Activated naive CD4-positive, alpha-beta T cell treated with anti-CD3 and anti-CD28 coated beads for 36 hours (primary cell): ENCODE measurements at regions of chr20 and their contacts with region 1.

Region 1: GRCh38 chr20:46689082-46689754 is at the start of gene TP53RK:
- DNase-seq: peak; percentile 99
- H3K4me3 Mint-ChIP-seq: peak within 1 kb of the TSS; percentile 90
- H3K27ac Mint-ChIP-seq: peak within 1 kb of the TSS; percentile 87
- H3K4me1 Mint-ChIP-seq: peaks cover 32% of the 10 kb centered on the region
- H3K27me3 Mint-ChIP-seq: no peaks in the 10 kb centered on the region
- total RNA-seq, gene TP53RK: 7.8 to 8.3 TPM

Region 2: DNA sequence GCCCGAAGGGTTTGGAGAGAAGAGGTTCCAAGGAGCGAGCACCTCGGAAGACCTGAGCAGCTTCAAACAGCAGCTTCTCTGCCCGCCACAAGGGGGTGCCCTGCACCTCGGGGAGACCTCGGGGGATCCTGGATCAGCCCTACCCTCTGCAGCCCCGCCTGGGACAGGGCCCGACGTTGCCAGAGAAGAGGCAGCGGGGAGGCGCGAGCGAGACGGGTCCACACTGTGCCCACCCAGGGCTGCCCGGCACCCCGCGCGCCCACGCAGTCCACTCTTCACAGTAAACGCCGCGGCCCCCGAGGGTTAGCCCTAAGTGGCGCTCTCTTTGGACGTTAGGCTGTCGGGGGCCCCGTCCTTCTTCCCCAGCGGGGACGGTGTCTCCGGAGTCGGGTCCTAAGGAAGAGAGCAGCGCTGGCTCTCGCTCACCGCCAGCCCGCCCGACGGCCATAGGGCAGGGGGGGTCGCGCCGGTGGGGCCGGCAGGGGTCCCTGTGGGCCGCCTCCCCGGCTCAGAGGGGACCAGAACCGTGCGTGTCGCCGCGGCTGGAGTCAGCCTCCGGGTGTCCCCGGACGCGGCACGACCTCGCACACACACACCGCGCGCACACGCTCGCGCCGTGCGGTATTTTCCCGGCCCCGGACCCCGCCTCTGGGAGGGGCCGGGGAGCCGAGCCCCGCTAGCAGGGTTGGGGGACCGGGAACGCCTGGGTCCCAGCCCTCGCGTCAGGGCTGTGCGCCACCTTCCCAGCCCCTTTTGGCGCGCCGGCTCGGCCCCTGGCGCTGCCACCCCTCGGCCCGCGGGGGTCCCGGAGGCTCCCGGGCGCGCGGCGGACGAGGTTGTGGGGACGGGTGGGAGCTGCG is 381.8 kb before region 1 on chr20:
- CTCF ChIA-PET with region 1: no interaction called
- intact Hi-C with region 1: loop called (anchors 5 kb)
- DNase-seq: peak; percentile 81
- H3K4me3 Mint-ChIP-seq: peak overlapping the region; percentile 25
- H3K27ac Mint-ChIP-seq: no peak overlapping the region
- H3K4me1 Mint-ChIP-seq: peaks cover 7% of the 10 kb centered on the region
- H3K27me3 Mint-ChIP-seq: peaks cover 57% of the 10 kb centered on the region

Region 3: GRCh38 chr20:46363800-46364634 is 325.2 kb before region 1 on chr20:
- CTCF ChIA-PET with region 1: no interaction called
- intact Hi-C with region 1: loop called (anchors 5 kb)
- DNase-seq: peak; percentile 87
- H3K4me3 Mint-ChIP-seq: peak overlapping the region; percentile 88
- H3K27ac Mint-ChIP-seq: peak overlapping the region; percentile 86
- H3K4me1 Mint-ChIP-seq: peaks cover 80% of the 10 kb centered on the region
- H3K27me3 Mint-ChIP-seq: no peaks in the 10 kb centered on the region

Region 4: GRCh38 chr20:46400828-46401477 is 288.3 kb before region 1 on chr20:
- CTCF ChIA-PET with region 1: no interaction called
- intact Hi-C with region 1: loop called (anchors 1 kb)
- DNase-seq: peak; percentile 63
- H3K4me3 Mint-ChIP-seq: peak overlapping the region; percentile 59
- H3K27ac Mint-ChIP-seq: peak overlapping the region; percentile 91
- H3K4me1 Mint-ChIP-seq: peaks cover 60% of the 10 kb centered on the region
- H3K27me3 Mint-ChIP-seq: no peaks in the 10 kb centered on the region

Region 5: GRCh38 chr20:46406199-46406985 is 282.8 kb before region 1 on chr20 and contains the start of gene ELMO2:
- CTCF ChIA-PET with region 1: interaction called, 3 read pairs
- intact Hi-C with region 1: loop called (anchors 1 kb)
- DNase-seq: peak; percentile 98
- H3K4me3 Mint-ChIP-seq: peak within 1 kb of the TSS; percentile 88
- H3K27ac Mint-ChIP-seq: peak within 1 kb of the TSS; percentile 88
- H3K4me1 Mint-ChIP-seq: peaks cover 55% of the 10 kb centered on the region
- H3K27me3 Mint-ChIP-seq: no peaks in the 10 kb centered on the region
- total RNA-seq, gene ELMO2: 76.8 to 81.0 TPM

Region 6: DNA sequence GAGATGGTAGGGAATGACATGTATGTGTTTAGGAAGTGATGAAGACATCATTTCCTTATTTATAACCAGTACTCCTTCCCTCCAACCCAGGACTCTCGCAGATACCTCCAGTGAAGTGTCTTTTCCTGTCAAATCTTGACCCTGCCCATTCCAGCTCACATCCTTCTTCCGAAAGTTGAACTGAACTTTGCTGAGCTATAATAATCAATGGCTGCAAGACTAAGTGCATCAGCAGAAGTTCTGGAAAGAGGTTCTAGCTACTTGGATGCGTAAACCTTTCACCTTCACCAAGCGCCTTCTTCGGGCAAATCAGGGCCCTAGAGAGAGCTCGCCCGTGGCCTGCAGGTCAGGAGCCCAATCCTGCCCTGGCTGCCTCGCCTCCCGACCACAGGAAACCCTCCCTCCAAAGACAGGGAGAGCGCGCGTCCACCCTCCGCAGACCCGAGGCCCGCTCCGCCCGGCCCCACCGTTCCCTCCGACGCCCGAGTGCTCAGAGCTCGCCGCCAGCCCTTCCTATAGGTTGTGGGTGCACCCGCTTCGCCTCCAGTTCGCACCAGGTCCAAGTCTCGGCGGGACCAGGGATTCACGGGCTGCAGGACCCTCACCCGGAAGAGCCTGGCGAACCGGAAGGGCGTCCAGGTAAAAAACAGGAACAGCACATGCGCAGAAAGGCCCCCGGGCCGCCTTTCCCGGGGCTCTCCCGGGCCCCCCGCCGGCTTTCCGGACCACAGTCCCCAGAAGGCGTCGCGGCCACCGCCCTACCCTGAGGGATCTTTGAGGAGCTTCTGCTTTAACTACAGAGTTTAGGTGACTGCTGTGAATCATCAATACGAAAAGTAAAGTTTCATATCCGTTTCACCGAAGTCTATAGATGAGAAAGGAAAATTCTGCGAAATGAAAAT is 176.0 kb before region 1 on chr20 and contains the start of gene ZNF334:
- CTCF ChIA-PET with region 1: interaction called, 4 read pairs
- intact Hi-C with region 1: loop called (anchors 2 kb)
- DNase-seq: peak; percentile 77
- H3K4me3 Mint-ChIP-seq: peak within 1 kb of the TSS; percentile 79
- H3K27ac Mint-ChIP-seq: peak within 1 kb of the TSS; percentile 39
- H3K4me1 Mint-ChIP-seq: peaks cover 29% of the 10 kb centered on the region
- H3K27me3 Mint-ChIP-seq: peaks cover 39% of the 10 kb centered on the region
- total RNA-seq, gene ZNF334: 1.7 to 2.1 TPM

Region 7: DNA sequence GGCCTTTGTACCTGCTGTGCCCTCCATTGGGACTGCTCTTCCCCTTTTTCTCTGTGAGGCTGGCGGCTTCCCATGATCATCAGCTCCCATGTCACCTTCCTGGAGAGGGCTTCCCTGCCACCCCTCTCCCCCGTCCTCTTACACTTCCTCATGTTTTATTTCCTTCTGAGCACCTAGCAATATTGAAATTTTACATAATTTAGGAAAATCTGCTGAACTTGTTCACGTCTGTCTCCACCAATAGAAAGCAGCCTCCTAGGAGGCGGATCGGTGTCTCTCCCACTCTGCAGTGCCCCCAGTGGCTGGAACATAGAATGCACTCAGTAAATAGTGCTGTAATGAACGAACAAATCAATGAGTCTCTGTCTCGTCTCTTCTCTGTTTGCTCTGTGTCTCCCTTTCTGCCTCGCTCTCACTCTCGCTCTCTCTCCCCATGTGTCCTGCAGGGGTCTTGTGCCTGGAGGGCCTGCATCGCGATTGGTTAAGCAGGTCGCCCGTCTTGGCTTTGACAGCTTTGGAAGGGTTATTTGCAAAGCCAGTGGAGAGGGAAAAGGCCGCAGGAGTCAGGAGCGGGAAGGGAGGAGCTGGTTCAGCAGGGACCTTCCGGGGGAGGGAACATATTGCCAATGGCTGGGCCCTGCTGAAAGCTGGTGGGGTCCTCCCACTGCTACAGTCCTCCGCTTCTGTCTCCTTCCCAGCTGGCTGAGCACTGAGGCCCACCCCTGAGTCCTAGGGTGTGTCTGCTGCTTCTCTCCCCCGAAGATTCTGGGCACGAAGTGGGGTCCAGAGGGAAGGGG is 126.6 kb before region 1 on chr20:
- CTCF ChIA-PET with region 1: no interaction called
- intact Hi-C with region 1: loop called (anchors 2 kb)
- DNase-seq: peak; percentile 83
- H3K4me3 Mint-ChIP-seq: no peak overlapping the region
- H3K27ac Mint-ChIP-seq: no peak overlapping the region
- H3K4me1 Mint-ChIP-seq: peaks cover 14% of the 10 kb centered on the region
- H3K27me3 Mint-ChIP-seq: peaks cover 7% of the 10 kb centered on the region

Region 8: DNA sequence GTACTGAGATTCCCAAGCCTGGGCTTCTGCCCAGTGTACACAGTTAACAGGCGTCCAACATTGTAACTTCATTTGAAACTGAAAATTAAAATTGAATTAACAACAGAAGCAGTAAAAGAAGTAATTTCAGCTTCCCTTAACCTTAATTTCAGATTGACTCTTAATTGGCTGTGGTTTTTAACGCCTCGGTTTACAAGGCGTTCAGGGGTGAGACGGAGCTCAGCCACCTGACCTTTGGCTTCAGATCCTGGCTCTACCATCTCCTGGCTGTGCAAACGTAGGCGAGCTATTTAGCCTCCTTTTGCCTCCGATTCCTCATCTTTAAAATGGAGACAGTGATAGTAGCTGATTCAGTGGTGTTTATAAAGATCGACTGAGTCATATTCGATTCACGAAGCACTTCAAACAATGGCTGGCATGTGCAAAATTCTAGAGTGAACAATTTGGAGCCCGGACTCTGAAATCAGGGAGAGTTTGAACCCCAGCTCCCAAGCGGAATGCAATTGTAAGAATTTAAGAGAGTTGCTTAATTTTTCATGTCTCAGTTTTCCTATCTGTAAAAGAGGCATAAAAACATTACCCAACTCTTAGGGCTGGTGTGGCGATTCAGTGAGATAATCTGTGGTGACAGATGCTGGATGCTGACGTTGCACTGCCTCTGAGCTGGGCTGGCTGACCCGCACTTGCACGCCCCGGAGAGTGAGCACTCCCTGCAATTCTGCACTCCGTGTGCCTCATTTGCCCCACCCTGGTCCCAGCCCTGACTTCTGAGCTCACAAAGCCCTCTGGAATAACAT is 115.2 kb before region 1 on chr20:
- CTCF ChIA-PET with region 1: no interaction called
- intact Hi-C with region 1: no loop called
- DNase-seq: no peak
- H3K4me3 Mint-ChIP-seq: no peak overlapping the region
- H3K27ac Mint-ChIP-seq: no peak overlapping the region
- H3K4me1 Mint-ChIP-seq: no peaks in the 10 kb centered on the region
- H3K27me3 Mint-ChIP-seq: peaks cover 3% of the 10 kb centered on the region

Region 9: DNA sequence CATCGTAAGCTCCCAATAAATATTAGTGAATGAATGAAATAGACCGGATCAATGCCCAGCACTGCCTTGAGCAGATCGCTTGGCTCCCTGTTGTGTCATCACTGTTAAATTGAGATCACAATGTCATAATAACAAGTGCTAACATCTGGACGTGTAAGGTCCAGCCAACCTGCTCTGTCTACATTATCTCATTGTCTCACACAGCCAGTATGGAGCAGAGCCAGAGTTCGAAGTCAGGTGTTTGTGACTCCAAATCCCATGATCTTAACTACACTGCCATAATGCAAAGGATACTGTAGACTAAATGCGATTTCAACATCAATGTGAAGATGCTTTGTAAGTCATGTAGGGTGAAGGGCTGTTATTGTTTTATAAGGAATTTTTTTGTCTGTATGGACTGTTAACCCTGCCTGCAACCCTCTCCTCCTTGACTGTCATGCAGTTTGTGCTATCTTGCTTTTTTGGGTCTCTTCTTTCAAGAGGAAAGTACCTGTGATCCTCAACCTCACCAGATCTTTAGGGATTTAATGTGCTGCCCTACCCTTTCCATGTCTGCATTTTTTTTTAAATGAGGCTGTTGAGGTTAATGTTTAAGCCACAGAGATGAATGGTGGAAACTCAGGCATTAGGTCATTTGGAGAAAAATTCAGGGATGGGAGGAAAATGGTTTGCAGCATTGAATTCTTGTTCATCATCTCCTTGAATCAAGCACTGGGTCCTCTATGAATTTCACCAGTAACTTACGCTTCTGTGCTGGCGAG is 89.8 kb before region 1 on chr20:
- CTCF ChIA-PET with region 1: no interaction called
- intact Hi-C with region 1: no loop called
- DNase-seq: no peak
- H3K4me3 Mint-ChIP-seq: no peak overlapping the region
- H3K27ac Mint-ChIP-seq: no peak overlapping the region
- H3K4me1 Mint-ChIP-seq: no peaks in the 10 kb centered on the region
- H3K27me3 Mint-ChIP-seq: no peaks in the 10 kb centered on the region

Region 10: GRCh38 chr20:46631212-46631869 is 57.9 kb before region 1 on chr20:
- CTCF ChIA-PET with region 1: no interaction called
- intact Hi-C with region 1: no loop called
- DNase-seq: no peak
- H3K4me3 Mint-ChIP-seq: no peak overlapping the region
- H3K27ac Mint-ChIP-seq: no peak overlapping the region
- H3K4me1 Mint-ChIP-seq: no peaks in the 10 kb centered on the region
- H3K27me3 Mint-ChIP-seq: peaks cover 13% of the 10 kb centered on the region

Region 11: GRCh38 chr20:46715292-46715756 is 26.1 kb after region 1 on chr20:
- CTCF ChIA-PET with region 1: no interaction called
- intact Hi-C with region 1: no loop called
- DNase-seq: no peak
- H3K4me3 Mint-ChIP-seq: no peak overlapping the region
- H3K27ac Mint-ChIP-seq: no peak overlapping the region
- H3K4me1 Mint-ChIP-seq: no peaks in the 10 kb centered on the region
- H3K27me3 Mint-ChIP-seq: peaks cover 26% of the 10 kb centered on the region